ENCODE measurements at regions of chr12 and their contacts with region 1.

Region 1: GRCh38 chr12:92987362-92987761 is 58.3 kb upstream of the EEA1 start:
- DNase-seq: no peak
- CTCF ChIP-seq: peak; percentile 50

Region 2: DNA sequence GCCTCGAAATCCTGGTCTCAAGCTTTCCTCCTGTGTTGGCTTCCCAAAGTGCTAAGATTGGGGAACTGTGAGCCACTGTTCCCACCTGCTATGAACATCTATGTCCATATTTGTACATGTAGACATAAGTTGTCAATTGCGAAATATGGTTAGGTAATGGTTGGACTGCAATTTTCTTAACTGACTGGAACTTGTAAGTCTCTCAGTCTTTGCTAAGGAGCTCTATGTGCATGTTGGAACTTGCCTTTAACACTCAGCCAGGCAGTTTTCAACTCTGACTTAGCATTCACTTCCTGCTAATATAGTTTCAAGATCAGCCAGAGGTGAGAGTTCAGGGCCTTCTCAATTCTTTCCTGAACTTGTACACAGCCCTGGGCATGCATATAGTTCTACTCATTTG is 13.8 kb before region 1 on chr12:
- CTCF ChIA-PET with region 1: interaction called, 63 read pairs
- POLR2A ChIA-PET with region 1: no interaction called
- DNase-seq: peak; percentile 46
- CTCF ChIP-seq: no peak

Region 3: GRCh38 chr12:93061472-93062419 is 74.4 kb after region 1 on chr12:
- CTCF ChIA-PET with region 1: interaction called, 11 read pairs
- POLR2A ChIA-PET with region 1: no interaction called
- DNase-seq: no peak
- CTCF ChIP-seq: no peak

Region 4: DNA sequence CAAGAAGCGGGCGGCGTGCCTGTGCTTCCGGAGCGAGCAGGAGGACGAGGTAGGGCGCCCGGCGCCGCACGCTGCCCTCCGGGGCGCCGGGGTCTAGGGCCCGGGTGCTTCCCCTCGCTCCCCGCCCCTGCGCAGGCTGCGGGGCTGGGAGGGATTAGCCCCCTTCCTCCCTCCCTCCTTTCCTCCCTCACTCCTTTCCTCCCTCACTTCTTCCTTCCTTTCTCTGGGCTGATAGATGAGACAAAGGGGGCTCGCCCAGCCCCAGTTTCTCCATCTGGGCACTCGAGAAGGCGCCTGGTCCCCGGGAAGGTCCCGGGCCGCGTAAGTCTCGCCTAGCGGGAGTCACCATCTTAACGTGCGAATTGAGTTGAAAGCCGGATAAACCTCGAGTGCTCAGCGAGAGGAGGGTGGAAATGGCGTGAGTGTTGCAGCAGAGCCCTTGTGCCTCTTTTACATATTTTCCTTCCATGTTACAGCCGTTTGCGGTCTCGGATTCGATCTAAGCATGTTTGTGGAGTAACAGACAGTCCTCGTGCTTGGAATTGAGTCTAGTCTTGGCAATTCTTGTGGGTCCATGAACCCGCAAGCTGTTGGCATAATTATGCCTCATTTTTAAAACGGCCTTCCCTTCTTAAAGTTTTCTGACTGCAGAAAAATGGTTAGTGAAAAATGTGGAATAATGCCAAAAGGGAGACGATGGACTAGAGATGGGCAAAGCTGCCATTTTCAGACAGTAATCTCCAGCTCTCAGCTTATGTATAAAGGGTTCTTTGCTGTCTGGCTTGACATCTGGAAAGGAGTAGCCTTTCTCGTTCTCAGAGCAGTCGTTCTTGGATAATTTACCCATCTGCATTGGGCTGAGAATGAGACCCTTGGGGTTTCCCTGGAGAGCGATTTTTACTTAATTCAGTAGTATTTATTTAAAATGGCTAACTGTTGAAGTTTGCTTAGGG is 391.3 kb after region 1 on chr12:
- CTCF ChIA-PET with region 1: interaction called, 18 read pairs
- POLR2A ChIA-PET with region 1: no interaction called
- DNase-seq: peak; percentile 59
- CTCF ChIP-seq: no peak

Region 5: GRCh38 chr12:93419388-93420034 is 432.1 kb after region 1 on chr12:
- CTCF ChIA-PET with region 1: interaction called, 54 read pairs
- POLR2A ChIA-PET with region 1: no interaction called
- DNase-seq: peak; percentile 27
- CTCF ChIP-seq: peak; percentile 53

Measured in GM10248 (cell line).